ENCODE measurements at regions of chr4 and their contacts with region 1.

Region 1: GRCh38 chr4:173013232-173013930 is 155.2 kb upstream of the GALNT7 start:
- DNase-seq: no peak
- H3K4me3 ChIP-seq: no peak overlapping the region
- CTCF ChIP-seq: peak; percentile 56

Region 2: DNA sequence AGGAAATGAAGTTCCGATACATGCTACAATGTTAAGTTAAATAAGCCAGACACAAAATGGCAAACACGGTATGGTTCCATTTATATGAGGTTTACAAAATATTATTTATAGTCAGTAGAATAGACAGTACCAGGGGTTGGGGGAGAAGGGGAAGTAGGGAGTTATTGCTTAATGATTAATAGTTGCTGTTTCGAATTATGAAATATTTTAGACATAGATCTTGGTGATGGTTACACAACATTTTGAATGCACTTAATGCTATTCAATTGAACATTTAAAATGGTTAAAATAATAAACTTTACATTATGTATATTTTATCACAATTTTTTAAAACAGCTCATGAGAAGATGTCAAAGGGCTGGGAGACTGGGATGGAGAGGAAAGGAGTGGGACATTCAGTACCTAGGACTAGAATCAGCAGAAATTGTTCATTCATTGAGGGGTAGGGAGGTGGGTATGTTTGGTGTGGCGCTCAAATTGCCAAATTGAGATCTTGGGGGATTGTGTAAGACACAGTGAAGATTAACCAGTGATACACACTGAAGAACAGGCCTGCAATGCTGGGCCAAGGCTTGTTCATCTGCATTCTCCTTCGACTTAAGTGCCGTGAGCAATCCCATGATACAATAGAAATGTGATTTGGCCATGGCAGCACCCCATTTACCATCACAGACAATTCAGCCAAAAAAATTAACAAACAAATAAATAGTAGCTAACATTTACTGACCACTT is 10.4 kb before region 1 on chr4:
- CTCF ChIA-PET with region 1: interaction called, 13 read pairs
- POLR2A ChIA-PET with region 1: no interaction called
- DNase-seq: no peak
- H3K4me3 ChIP-seq: no peak overlapping the region
- CTCF ChIP-seq: no peak

Region 3: DNA sequence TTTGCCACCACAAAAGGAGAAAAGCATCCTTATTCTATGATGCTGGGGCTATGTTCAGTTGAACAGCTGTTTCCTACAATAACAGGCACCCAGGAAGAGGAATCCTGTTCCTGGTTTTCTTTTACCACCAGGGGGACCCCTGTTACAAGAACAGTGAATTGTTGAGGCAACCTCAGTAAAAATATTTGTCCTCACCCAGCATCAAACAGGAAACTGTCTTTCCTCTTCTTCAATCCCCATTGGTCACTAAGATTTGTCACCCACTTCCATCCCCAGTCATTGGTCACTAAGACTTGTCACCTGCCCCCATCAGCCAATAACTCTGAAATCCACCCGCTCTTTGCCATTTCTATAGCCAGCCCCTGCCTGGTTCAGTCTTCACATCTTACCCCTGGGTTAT is 11.8 kb after region 1 on chr4:
- CTCF ChIA-PET with region 1: interaction called, 33 read pairs
- POLR2A ChIA-PET with region 1: no interaction called
- DNase-seq: no peak
- H3K4me3 ChIP-seq: no peak overlapping the region
- CTCF ChIP-seq: peak; percentile 54

Region 4: DNA sequence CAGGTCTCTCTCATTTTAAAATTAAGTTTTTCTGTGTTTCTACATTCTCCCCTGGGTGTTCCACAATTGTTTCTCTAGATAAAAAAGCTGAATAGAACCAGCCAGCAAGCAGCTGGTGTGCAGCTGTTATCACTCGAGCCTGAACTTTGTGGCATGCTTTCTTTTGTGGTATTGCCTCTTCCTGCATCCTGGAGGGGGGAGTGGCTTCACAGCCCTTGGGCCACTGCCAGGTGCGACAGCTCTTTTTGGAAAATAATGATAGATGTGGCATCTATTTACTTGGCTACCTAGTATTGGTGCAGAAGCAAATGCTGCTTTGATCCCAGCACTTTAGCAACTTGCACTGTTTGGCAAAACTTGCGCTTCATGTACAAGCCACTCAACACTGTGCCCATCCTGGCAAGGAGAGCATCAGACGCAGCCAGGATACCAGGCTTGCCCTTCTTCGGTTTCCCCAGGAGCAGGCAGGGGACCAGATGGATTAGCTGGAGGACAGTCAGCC is 251.4 kb after region 1 on chr4:
- CTCF ChIA-PET with region 1: interaction called, 55 read pairs
- POLR2A ChIA-PET with region 1: no interaction called
- DNase-seq: no peak
- H3K4me3 ChIP-seq: no peak overlapping the region
- CTCF ChIP-seq: no peak

Region 5: GRCh38 chr4:174278467-174278866 is 1265.1 kb after region 1 on chr4:
- CTCF ChIA-PET with region 1: no interaction called
- POLR2A ChIA-PET with region 1: no interaction called
- DNase-seq: no peak
- H3K4me3 ChIP-seq: no peak overlapping the region
- CTCF ChIP-seq: no peak

Measured in AG04449 (cell line).